ENCODE measurements at regions of chr14 and their contacts with region 1.

Region 1: DNA sequence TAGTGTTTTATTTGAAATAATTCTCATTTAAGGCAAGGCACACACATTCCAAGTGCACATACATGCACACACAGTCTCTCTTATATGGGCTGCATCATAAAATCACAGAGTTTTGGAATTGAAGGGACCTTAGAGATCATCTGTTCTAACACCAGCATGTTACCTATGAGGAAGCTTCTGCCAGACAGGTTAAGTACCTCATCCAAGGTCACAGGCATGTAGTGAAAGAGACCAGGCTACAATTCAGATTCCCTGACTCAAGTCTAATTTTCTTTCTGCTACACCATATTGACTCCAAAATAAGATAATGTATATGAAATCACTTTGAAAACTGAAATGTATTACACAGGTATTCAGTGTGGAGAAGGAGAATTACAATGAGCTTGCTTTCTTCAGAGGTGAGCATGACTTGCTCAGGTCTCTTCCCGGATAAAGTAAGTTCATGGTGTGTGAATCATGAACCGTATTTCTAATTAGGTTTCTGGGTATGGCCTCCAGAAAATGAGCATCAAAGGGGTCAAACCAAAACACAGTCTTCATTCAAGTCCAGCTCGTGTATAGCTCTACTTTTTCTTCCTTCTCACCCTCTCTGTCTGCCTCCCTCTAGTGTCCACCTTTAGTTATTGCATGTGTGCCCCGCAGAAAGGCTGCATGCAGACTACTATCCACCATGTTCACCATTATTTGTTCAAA is 411.9 kb downstream of the FUT8 start:
- DNase-seq: peak; percentile 69
- H3K4me3 Mint-ChIP-seq: no peak overlapping the region
- H3K27ac Mint-ChIP-seq: no peak overlapping the region
- H3K4me1 Mint-ChIP-seq: peaks cover 14% of the 10 kb centered on the region
- H3K27me3 Mint-ChIP-seq: peaks cover 3% of the 10 kb centered on the region

Region 2: DNA sequence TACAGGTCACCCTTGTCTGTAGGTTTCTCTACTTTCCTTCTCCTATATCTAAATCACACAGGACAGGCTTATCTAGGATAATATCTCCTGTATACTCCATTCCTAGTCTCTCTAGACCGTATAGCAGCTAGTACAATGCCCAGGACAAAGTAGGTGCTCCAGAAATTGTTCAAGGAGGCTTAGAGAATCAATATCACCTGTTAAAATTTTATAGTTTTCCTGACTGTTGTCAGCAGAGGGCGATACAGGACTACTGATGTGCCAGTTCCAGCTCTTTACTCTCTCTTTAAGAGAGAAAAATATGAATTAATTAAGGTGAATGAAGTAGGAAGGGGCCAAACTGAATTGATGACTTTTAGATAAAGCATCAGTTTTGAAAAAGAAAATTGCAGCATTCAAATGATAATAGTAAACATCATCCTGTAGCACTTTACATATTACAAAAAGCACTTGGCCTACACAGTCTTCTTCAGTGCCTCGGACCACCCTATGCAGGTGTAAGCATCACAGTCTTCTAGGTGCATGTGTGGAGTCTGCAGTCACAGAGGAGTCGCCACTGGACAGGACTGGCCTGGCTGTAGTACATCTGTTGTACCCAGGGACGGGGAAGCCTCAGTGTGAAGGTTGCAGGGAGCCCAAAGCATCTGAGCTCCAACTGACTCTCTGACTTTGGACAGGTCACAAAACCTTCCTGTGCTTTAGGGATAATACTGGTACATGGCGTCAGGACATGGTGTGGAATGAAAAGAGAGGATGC is 660.2 kb before region 1 on chr14:
- CTCF ChIA-PET with region 1: interaction called, 21 read pairs
- POLR2A ChIA-PET with region 1: no interaction called
- DNase-seq: peak; percentile 49
- H3K4me3 Mint-ChIP-seq: no peak overlapping the region
- H3K27ac Mint-ChIP-seq: no peak overlapping the region
- H3K4me1 Mint-ChIP-seq: peaks cover 22% of the 10 kb centered on the region
- H3K27me3 Mint-ChIP-seq: no peaks in the 10 kb centered on the region

Region 3: DNA sequence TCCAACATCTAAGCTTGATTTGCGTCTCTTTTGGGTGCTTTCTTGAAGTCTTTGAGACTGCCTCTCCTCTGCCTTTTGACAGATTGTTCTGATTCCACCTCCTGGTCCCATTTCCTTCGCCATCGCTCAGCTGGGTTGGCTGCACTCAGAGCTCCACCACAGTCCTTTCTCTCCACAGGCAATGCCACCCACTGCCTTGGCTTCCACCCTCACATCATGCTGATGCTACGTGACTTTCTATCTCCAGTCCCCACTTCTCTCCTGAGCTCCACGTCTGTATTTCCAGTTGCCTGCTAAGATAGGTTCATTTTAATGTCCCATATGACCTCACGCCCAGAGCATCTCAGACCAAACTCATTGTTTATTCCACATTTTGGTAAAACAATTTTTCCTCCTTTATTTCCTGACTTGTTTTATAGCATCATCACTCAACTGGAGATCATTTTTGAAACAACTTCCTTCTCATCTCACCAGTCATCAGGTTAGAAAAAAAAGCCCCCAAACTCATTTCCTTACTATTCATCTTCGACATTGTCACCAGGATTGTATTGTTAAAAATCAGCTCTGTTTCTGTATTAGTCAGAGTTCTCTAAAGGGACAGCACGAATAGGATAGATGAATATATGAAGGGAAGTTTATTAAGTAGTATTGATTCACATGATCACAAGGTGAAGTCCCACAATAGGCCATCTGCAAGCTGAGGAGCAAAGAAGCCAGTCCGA is 19.5 kb before region 1 on chr14:
- CTCF ChIA-PET with region 1: interaction called, 16 read pairs
- POLR2A ChIA-PET with region 1: no interaction called
- DNase-seq: no peak
- H3K4me3 Mint-ChIP-seq: no peak overlapping the region
- H3K27ac Mint-ChIP-seq: no peak overlapping the region
- H3K4me1 Mint-ChIP-seq: peaks cover 9% of the 10 kb centered on the region
- H3K27me3 Mint-ChIP-seq: no peaks in the 10 kb centered on the region

Region 4: GRCh38 chr14:65879248-65880009 is 55.0 kb after region 1 on chr14:
- CTCF ChIA-PET with region 1: interaction called, 22 read pairs
- POLR2A ChIA-PET with region 1: interaction called, 3 read pairs
- DNase-seq: peak; percentile 26
- H3K4me3 Mint-ChIP-seq: no peak overlapping the region
- H3K27ac Mint-ChIP-seq: peak overlapping the region; percentile 88
- H3K4me1 Mint-ChIP-seq: peaks cover 5% of the 10 kb centered on the region
- H3K27me3 Mint-ChIP-seq: no peaks in the 10 kb centered on the region

Region 5: DNA sequence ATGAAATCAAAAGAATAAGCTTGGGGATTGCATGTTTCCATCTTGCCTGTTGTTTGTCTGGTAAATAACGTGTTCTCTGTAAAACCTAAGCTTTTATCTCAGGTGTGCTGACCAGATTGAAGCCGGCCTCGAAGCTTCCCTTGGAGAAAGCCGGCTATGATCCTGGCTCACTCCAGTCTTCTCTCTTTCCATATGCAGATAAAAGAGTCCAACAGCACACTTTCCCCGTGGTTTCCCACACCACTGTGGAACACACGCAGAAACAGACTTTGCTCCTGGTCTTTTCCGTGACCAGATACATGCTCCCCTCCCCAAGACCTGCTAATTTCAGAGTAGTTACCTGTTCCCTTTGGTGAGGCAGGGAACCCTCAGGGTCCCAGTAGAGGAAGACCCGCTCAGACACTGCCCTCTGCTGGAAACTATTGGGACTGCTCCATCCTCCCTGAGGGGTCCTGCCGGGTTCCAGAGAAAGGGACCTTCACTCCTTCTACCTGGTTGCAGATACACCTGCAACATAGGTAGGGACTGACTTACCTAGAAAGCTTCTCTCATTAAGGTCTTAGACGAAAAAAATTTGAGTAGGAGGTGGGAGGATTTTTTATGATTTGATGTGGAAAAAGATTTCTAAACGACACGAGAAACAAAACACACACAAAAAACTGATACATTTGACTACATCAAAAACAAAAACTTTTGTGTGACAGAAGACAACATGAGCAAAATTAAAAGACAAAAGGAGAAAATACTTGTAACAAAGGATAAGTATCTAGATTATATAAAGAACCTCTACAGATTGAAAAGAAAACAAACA is 246.3 kb after region 1 on chr14:
- CTCF ChIA-PET with region 1: interaction called, 10 read pairs
- POLR2A ChIA-PET with region 1: interaction called, 3 read pairs
- DNase-seq: peak; percentile 71
- H3K4me3 Mint-ChIP-seq: no peak overlapping the region
- H3K27ac Mint-ChIP-seq: no peak overlapping the region
- H3K4me1 Mint-ChIP-seq: peaks cover 11% of the 10 kb centered on the region
- H3K27me3 Mint-ChIP-seq: peaks cover 12% of the 10 kb centered on the region